H1 (cell line): ENCODE measurements at regions of chr1 and their contacts with region 1.

Region 1: GRCh38 chr1:178310685-178311105 is 186.1 kb downstream of the CLEC20A start:
- DNase-seq: no peak
- H3K4me3 ChIP-seq: no peak overlapping the region
- H3K27ac ChIP-seq: no peak overlapping the region
- H3K4me1 ChIP-seq: no peaks in the 10 kb centered on the region; a peak in 2 of 7 replicates
- H3K27me3 ChIP-seq: no peaks in the 10 kb centered on the region
- CTCF ChIP-seq: peak in 2 of 3 experiments; percentile 63 to 74; a peak in 2 of 4 replicates
- EP300 ChIP-seq: no peak
- POLR2A ChIP-seq: no peak
- RAD21 ChIP-seq: peak; percentile 83 to 85

Region 2: GRCh38 chr1:178262120-178262500 is 48.6 kb before region 1 on chr1:
- CTCF ChIA-PET with region 1: no interaction called
- POLR2A ChIA-PET with region 1: no interaction called
- DNase-seq: no peak
- H3K4me3 ChIP-seq: no peak overlapping the region
- H3K27ac ChIP-seq: 0 out of 2 replicates have a peak overlapping the region, but pooled peaks have one; percentile 13
- H3K4me1 ChIP-seq: peaks cover 3 to 22% (median 7%) of the 10 kb centered on the region in 4 experiments; a peak in 5 of 7 replicates
- H3K27me3 ChIP-seq: no peaks in the 10 kb centered on the region
- CTCF ChIP-seq: no peak
- EP300 ChIP-seq: no peak
- POLR2A ChIP-seq: no peak
- RAD21 ChIP-seq: no peak

Region 3: GRCh38 chr1:178324003-178324402 is 13.3 kb after region 1 on chr1:
- CTCF ChIA-PET with region 1: interaction called, 20 read pairs
- POLR2A ChIA-PET with region 1: interaction called, 6 read pairs
- DNase-seq: no peak
- H3K4me3 ChIP-seq: no peak overlapping the region
- H3K27ac ChIP-seq: no peak overlapping the region
- H3K4me1 ChIP-seq: no peaks in the 10 kb centered on the region
- H3K27me3 ChIP-seq: no peaks in the 10 kb centered on the region
- CTCF ChIP-seq: no peak
- EP300 ChIP-seq: no peak
- POLR2A ChIP-seq: no peak
- RAD21 ChIP-seq: no peak

Region 4: DNA sequence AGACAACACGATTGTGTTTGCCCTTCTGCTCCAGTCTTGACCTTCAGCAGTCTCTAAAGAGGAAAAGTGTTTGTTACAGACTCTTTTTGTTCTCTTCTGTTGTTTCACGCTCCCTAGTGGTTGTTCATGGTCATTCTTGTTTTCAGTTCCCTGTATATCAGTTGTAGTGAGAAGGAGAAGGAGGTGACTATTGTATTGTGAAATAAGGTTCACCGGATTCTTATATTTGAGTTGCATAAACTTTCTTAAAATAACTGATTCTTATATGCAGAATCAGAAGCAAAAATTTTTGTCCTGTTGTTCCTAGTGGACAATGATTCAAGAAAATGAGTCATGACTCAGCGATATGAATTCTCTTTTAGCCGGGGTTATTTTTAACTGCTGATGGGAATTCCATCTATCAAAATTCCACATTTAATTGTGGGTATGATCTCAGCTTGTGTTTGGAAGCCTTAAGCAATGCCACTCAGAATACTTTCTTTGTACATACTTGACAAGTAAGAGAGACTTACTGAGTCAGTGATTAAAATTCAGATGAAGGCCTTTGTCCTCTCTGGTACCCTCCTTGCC is 33.9 kb after region 1 on chr1:
- CTCF ChIA-PET with region 1: interaction called, 50 read pairs
- POLR2A ChIA-PET with region 1: no interaction called
- DNase-seq: no peak
- H3K4me3 ChIP-seq: no peak overlapping the region; a peak in 1 of 8 replicates
- H3K27ac ChIP-seq: no peak overlapping the region
- H3K4me1 ChIP-seq: peaks cover 0 to 17% (median 11%) of the 10 kb centered on the region in 4 experiments; a peak in 4 of 7 replicates
- H3K27me3 ChIP-seq: no peaks in the 10 kb centered on the region
- CTCF ChIP-seq: peak in 2 of 3 experiments; percentile 33 to 57; a peak in 2 of 4 replicates
- EP300 ChIP-seq: no peak
- POLR2A ChIP-seq: no peak
- RAD21 ChIP-seq: peak; percentile 47 to 55

Region 5: DNA sequence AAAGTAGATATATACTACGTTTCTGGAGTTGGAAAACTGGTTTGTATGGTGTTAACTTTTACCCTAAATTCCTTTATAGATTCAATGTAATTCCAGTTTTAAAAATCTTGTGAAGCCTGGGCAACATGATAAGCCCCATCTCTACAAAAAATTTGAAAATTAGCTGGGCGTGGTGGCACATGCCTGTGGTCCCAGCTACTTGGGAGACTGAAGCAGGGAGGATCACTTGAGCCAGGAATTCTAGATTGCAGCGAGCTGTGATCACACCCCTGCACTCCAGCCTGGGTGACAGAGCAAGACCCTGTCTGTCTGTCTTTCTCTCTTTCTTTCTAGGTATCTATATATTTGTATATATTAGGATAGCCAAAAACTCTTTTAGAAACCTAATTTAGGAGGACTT is 44.1 kb after region 1 on chr1:
- CTCF ChIA-PET with region 1: interaction called, 13 read pairs
- POLR2A ChIA-PET with region 1: no interaction called
- DNase-seq: no peak
- H3K4me3 ChIP-seq: no peak overlapping the region
- H3K27ac ChIP-seq: no peak overlapping the region
- H3K4me1 ChIP-seq: no peaks in the 10 kb centered on the region
- H3K27me3 ChIP-seq: no peaks in the 10 kb centered on the region
- CTCF ChIP-seq: no peak
- EP300 ChIP-seq: no peak
- POLR2A ChIP-seq: no peak
- RAD21 ChIP-seq: no peak

Region 6: DNA sequence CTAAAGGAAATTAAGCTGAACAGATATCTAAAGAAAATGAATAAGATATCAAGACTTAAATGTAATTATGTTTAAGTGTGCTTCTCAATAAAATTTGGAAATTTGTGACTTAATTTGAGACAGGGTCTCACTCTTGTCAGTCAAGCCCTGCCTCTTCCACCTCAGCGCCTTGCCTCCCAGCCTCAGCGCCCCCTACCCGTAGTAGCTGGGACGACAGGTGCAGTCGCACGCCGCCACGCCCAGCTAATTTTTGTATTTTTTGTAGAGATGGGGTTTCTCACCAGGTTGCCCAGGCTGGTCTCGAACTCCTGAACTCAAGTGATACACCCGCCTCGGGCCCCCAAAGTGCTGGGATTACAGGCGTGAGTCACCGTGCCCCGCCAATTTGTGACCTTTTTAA is 69.1 kb after region 1 on chr1:
- CTCF ChIA-PET with region 1: interaction called, 12 read pairs
- POLR2A ChIA-PET with region 1: no interaction called
- DNase-seq: peak in 1 of 2 experiments; percentile 91
- H3K4me3 ChIP-seq: no peak overlapping the region
- H3K27ac ChIP-seq: no peak overlapping the region
- H3K4me1 ChIP-seq: peaks cover 0 to 3% (median 0%) of the 10 kb centered on the region in 4 experiments; a peak in 1 of 7 replicates
- H3K27me3 ChIP-seq: no peaks in the 10 kb centered on the region
- CTCF ChIP-seq: peak; percentile 77 to 92 (median 78)
- EP300 ChIP-seq: no peak
- POLR2A ChIP-seq: no peak
- RAD21 ChIP-seq: peak; percentile 53 to 66

Region 7: GRCh38 chr1:178470411-178470960 is 159.8 kb after region 1 on chr1:
- CTCF ChIA-PET with region 1: interaction called, 11 read pairs
- POLR2A ChIA-PET with region 1: no interaction called
- DNase-seq: no peak
- H3K4me3 ChIP-seq: no peak overlapping the region
- H3K27ac ChIP-seq: no peak overlapping the region
- H3K4me1 ChIP-seq: no peaks in the 10 kb centered on the region
- H3K27me3 ChIP-seq: no peaks in the 10 kb centered on the region
- CTCF ChIP-seq: no peak
- EP300 ChIP-seq: no peak
- POLR2A ChIP-seq: no peak
- RAD21 ChIP-seq: no peak

Region 8: GRCh38 chr1:178532392-178532791 is 221.7 kb after region 1 on chr1:
- CTCF ChIA-PET with region 1: interaction called, 26 read pairs
- POLR2A ChIA-PET with region 1: no interaction called
- DNase-seq: peak; percentile 54 to 94
- H3K4me3 ChIP-seq: no peak overlapping the region; a peak in 1 of 8 replicates
- H3K27ac ChIP-seq: no peak overlapping the region
- H3K4me1 ChIP-seq: peaks cover 0 to 2% (median under 1%) of the 10 kb centered on the region in 4 experiments; a peak in 1 of 7 replicates
- H3K27me3 ChIP-seq: no peaks in the 10 kb centered on the region; a peak in 1 of 7 replicates
- CTCF ChIP-seq: peak; percentile 89 to 96 (median 94)
- EP300 ChIP-seq: no peak
- POLR2A ChIP-seq: no peak
- RAD21 ChIP-seq: peak; percentile 96 to 97